ENCODE measurements at regions of chr17 and their contacts with region 1.

Region 1: DNA sequence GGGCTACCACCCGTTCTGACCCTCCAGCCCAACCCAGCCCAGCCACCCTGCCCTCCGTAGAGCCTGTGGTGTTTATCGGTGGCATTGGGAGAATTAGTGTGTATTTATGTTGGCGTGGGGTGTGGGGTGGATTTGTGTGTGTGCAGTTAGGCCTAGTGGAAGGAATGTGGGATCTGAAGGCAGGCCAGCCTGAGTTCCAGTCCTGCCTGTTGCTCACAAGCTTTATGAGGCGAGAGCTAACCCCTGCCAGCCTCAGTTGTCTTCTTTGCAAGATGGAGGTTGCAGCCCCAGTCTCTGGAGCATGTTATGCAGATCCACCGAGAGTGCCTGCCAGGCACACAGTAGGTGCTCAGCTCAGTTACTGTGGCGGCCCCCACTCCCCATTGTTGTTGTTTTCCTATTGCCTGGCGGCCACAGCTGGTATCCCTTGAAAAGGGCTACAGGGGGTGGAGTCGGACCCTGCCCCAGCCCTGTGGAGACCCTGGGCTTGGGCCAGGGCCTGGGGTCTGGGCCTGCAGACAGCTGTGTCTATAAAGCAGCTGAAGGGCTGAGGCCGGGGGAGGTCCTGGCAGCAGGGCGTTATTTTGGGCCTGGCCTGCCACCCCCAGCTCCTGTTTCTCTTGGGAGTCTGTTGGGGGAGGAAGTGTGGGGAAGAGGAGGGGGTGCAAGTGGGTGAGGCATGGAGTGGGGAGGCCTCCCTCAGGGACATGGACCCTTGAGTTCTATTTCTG is 5.1 kb downstream of the ERBB2 start:
- DNase-seq: peak; percentile 99
- H3K4me3 Mint-ChIP-seq: peak overlapping the region; percentile 71
- H3K27ac Mint-ChIP-seq: peak overlapping the region; percentile 67
- H3K4me1 Mint-ChIP-seq: peaks cover 92% of the 10 kb centered on the region
- H3K27me3 Mint-ChIP-seq: no peaks in the 10 kb centered on the region
- CTCF ChIP-seq: no peak

Region 2: GRCh38 chr17:39306509-39307212 is 398.3 kb before region 1 on chr17:
- CTCF ChIA-PET with region 1: no interaction called
- intact Hi-C with region 1: no loop called
- DNase-seq: no peak
- H3K4me3 Mint-ChIP-seq: no peak overlapping the region
- H3K27ac Mint-ChIP-seq: no peak overlapping the region
- H3K4me1 Mint-ChIP-seq: no peaks in the 10 kb centered on the region
- H3K27me3 Mint-ChIP-seq: no peaks in the 10 kb centered on the region
- CTCF ChIP-seq: no peak

Region 3: DNA sequence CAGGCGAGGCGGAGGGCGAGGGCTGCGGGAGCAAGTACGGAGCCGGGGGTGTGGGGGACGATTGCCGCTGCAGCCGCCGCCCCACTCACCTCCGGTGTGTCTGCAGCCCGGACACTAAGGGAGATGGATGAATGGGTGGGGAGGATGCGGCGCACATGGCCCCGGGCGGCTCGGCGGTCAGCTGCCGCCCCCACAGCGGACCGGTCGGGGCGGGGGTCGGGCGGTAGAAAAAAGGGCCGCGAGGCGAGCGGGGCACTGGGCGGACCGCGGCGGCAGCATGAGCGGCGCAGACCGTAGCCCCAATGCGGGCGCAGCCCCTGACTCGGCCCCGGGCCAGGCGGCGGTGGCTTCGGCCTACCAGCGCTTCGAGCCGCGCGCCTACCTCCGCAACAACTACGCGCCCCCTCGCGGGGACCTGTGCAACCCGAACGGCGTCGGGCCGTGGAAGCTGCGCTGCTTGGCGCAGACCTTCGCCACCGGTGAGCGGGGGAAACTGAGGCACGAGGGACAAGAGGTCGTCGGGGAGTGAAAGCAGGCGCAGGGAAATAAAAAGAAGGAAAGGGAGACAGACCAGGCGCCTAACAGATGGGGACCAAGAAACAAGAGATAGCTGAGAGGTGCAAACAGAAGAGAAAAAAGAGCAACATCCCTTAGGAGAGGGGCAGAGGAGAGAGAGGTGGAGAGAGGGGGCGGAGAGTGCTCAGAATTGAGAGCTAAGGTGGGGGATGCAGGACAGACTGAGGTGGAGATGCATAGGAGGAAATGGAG is 36.6 kb before region 1 on chr17 and contains the start of gene PNMT:
- CTCF ChIA-PET with region 1: interaction called, 34,714 read pairs
- intact Hi-C with region 1: loop called (anchors 1 kb)
- DNase-seq: peak; percentile 100
- H3K4me3 Mint-ChIP-seq: peak within 1 kb of the TSS; percentile 24
- H3K27ac Mint-ChIP-seq: peak within 1 kb of the TSS; percentile 0
- H3K4me1 Mint-ChIP-seq: peaks cover 65% of the 10 kb centered on the region
- H3K27me3 Mint-ChIP-seq: peaks cover 69% of the 10 kb centered on the region
- CTCF ChIP-seq: no peak
- total RNA-seq, gene PNMT: 1.3 and 3.2 TPM in 2 replicates

Region 4: DNA sequence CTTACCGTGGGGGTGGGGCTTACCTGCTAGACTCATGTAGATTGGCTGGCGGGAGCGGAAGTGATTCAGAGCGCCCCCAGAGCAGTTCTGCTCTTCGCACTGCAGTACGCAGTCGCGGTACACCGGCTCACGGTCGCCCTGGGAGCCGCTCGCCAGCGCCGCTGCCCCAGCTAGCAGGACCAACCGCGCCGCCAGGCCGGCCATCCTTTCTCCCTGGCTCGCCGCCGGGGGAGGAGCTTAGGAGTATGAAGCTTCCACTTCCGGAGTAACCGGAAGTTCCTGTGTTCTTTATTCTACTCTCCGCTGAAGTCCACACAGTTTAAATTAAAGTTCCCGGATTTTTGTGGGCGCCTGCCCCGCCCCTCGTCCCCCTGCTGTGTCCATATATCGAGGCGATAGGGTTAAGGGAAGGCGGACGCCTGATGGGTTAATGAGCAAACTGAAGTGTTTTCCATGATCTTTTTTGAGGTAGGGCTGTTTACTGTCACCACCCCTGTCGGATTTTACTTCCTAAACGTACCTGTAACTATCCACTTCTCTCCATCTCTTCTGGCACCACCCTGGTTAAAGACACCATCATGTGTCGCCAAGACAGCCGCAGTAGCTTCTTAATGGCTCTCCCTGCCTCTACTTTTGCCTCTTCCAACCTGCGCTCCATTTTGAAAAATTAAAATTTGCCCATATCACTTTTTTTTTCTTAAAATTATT is 17.0 kb before region 1 on chr17 and contains the start of gene PGAP3:
- CTCF ChIA-PET with region 1: interaction called, 34,714 read pairs
- intact Hi-C with region 1: loop called (anchors 2 kb)
- DNase-seq: peak; percentile 100
- H3K4me3 Mint-ChIP-seq: peak within 1 kb of the TSS; percentile 64
- H3K27ac Mint-ChIP-seq: peak within 1 kb of the TSS; percentile 63
- H3K4me1 Mint-ChIP-seq: peaks cover 27% of the 10 kb centered on the region
- H3K27me3 Mint-ChIP-seq: no peaks in the 10 kb centered on the region
- CTCF ChIP-seq: no peak
- total RNA-seq, gene PGAP3: 1,186 and 1,276 TPM in 2 replicates

Region 5: DNA sequence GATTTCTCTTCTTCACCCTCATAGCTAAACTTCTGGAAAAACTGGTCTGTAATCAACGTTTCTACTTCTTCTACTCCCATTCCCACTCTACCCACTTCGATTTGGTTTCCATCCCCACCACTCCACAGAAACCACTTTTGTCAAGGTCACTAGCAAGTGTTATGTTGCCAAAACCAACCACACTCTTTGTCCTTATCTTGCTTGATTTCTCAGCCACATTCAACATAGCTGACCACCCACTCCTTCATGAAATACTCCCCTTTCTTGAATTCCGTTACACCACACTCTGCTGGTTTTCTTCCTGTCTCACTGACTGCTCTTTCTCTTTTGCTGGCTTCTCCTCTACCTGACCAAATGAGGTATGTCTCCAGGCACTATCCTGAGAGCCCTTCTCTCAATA is 147.3 kb after region 1 on chr17:
- CTCF ChIA-PET with region 1: interaction called, 274 read pairs
- intact Hi-C with region 1: no loop called
- DNase-seq: peak; percentile 59
- H3K4me3 Mint-ChIP-seq: no peak overlapping the region
- H3K27ac Mint-ChIP-seq: no peak overlapping the region
- H3K4me1 Mint-ChIP-seq: peaks cover 10% of the 10 kb centered on the region
- H3K27me3 Mint-ChIP-seq: no peaks in the 10 kb centered on the region
- CTCF ChIP-seq: no peak

Region 6: GRCh38 chr17:39952680-39953470 is 247.9 kb after region 1 on chr17:
- CTCF ChIA-PET with region 1: interaction called, 8,195 read pairs
- intact Hi-C with region 1: loop called (anchors 1 kb)
- DNase-seq: peak; percentile 100
- H3K4me3 Mint-ChIP-seq: peak overlapping the region; percentile 58
- H3K27ac Mint-ChIP-seq: peak overlapping the region; percentile 18
- H3K4me1 Mint-ChIP-seq: peaks cover 42% of the 10 kb centered on the region
- H3K27me3 Mint-ChIP-seq: peaks cover 15% of the 10 kb centered on the region
- CTCF ChIP-seq: no peak

Region 7: DNA sequence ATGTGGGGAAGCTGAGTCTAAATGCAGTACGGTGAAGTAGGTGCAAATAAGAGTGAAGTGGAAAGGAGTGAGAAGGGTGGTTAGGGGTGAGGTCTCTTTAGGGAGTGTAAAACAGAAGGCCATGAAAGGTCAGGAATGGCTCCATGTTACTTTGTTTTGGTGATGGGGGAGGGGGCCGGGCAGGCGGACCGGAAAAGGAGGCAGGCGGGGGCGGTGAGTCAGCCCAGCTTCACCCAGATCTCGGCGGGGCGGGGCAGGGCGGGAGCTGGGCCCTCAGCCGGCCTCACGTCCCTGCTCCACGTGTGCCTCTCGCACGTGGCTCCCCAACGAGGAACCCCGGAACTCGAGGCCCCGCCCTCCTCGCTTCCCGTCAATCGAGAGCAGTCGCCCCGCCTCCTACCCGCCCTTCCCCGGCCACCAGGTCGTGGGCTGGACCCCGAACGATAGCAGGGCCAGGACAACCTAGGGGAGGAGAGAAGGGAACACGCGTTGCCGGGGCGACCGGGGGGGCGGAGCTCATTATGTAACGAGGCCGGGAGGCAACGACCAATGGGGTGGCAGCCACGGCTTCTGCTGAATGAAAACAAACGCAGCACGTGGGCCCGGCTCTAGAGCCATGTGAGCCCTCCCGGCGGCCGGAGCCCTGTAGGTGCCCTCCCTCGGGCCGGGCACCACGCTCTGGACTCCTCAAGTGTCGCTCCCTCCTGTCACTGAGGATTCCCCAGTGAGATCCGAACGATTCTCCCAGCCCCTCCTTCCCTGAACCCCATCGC is 394.0 kb after region 1 on chr17:
- CTCF ChIA-PET with region 1: interaction called, 10 read pairs
- intact Hi-C with region 1: loop called (anchors 5 kb)
- DNase-seq: peak; percentile 100
- H3K4me3 Mint-ChIP-seq: peak overlapping the region; percentile 80
- H3K27ac Mint-ChIP-seq: peak overlapping the region; percentile 85
- H3K4me1 Mint-ChIP-seq: peaks cover 73% of the 10 kb centered on the region
- H3K27me3 Mint-ChIP-seq: no peaks in the 10 kb centered on the region
- CTCF ChIP-seq: no peak

Region 8: DNA sequence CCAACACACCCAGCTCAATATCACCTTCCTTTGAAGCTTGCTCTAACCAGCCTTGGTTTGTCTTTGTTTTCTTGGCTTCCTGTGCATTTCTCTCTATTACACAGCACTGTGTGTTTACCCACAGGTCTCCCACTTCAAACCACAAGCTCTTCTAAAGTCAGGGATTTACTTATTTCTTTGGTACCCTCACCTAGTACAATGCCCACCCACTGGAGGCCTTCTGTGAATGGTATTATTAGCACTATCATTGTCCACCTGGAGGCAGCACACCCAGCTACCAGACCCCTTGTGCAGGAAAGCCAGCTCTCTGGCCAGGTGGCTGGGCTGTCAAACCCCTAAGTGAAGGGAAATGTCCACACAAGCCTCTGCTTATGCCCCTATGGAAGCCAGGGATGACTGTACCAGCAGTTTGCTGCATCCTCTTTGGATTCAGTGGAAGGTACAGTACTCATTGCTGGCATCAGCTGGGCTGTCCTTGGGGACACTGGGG is 722.1 kb after region 1 on chr17:
- CTCF ChIA-PET with region 1: no interaction called
- intact Hi-C with region 1: no loop called
- DNase-seq: peak; percentile 45
- H3K4me3 Mint-ChIP-seq: no peak overlapping the region
- H3K27ac Mint-ChIP-seq: no peak overlapping the region
- H3K4me1 Mint-ChIP-seq: no peaks in the 10 kb centered on the region
- H3K27me3 Mint-ChIP-seq: peaks cover 50% of the 10 kb centered on the region
- CTCF ChIP-seq: no peak